K562 (cell line): ENCODE measurements at regions of chr11 and their contacts with region 1.

Region 1: GRCh38 chr11:48109046-48109666 is 107.5 kb upstream of the OR4B1 start:
- DNase-seq: peak; percentile 50 to 58 (median 55)
- ATAC-seq: peak; percentile 79
- H3K4me3 ChIP-seq: no peak overlapping the region
- H3K27ac ChIP-seq: no peak overlapping the region
- H3K4me1 ChIP-seq: peaks cover 4 to 5% of the 10 kb centered on the region in 2 experiments; a peak in 4 of 5 replicates
- H3K27me3 ChIP-seq: no peaks in the 10 kb centered on the region
- CTCF ChIP-seq: peak; percentile 41 to 66 (median 46); a peak in 4 of 6 replicates
- EP300 ChIP-seq: no peak
- POLR2A ChIP-seq: no peak
- RAD21 ChIP-seq: peak; percentile 50 to 69; a peak in 3 of 4 replicates

Region 2: GRCh38 chr11:47766305-47767227 is 342.6 kb before region 1 on chr11:
- CTCF ChIA-PET with region 1: no interaction called
- POLR2A ChIA-PET with region 1: no interaction called
- in situ Hi-C with region 1: no loop called
- intact Hi-C with region 1: loop called (anchors 5 kb)
- DNase-seq: peak in 2 of 4 experiments; percentile 28 to 72
- ATAC-seq: peak; percentile 47
- H3K4me3 ChIP-seq: peak overlapping the region; percentile 85
- H3K27ac ChIP-seq: peak overlapping the region; percentile 93
- H3K4me1 ChIP-seq: peaks cover 8 to 23% of the 10 kb centered on the region in 2 experiments; a peak in 4 of 5 replicates
- H3K27me3 ChIP-seq: no peaks in the 10 kb centered on the region
- CTCF ChIP-seq: no peak
- EP300 ChIP-seq: no peak
- POLR2A ChIP-seq: no peak
- RAD21 ChIP-seq: no peak

Region 3: GRCh38 chr11:47858169-47858543 is 251.0 kb before region 1 on chr11:
- CTCF ChIA-PET with region 1: no interaction called
- POLR2A ChIA-PET with region 1: no interaction called
- in situ Hi-C with region 1: loop called (anchors 10 kb)
- intact Hi-C with region 1: loop called (anchors 10 kb)
- DNase-seq: no peak
- ATAC-seq: no peak
- H3K4me3 ChIP-seq: no peak overlapping the region
- H3K27ac ChIP-seq: no peak overlapping the region
- H3K4me1 ChIP-seq: peaks cover 0 to 9% of the 10 kb centered on the region in 2 experiments; a peak in 3 of 5 replicates
- H3K27me3 ChIP-seq: no peaks in the 10 kb centered on the region
- CTCF ChIP-seq: no peak
- EP300 ChIP-seq: no peak
- POLR2A ChIP-seq: no peak
- RAD21 ChIP-seq: no peak

Region 4: GRCh38 chr11:47932544-47932943 is 176.6 kb before region 1 on chr11:
- CTCF ChIA-PET with region 1: interaction called, 77 read pairs
- POLR2A ChIA-PET with region 1: no interaction called
- in situ Hi-C with region 1: loop called (anchors 5 kb)
- intact Hi-C with region 1: loop called (anchors 1 kb)
- DNase-seq: no peak
- ATAC-seq: no peak
- H3K4me3 ChIP-seq: no peak overlapping the region
- H3K27ac ChIP-seq: no peak overlapping the region
- H3K4me1 ChIP-seq: no peaks in the 10 kb centered on the region; a peak in 1 of 5 replicates
- H3K27me3 ChIP-seq: no peaks in the 10 kb centered on the region
- CTCF ChIP-seq: no peak
- EP300 ChIP-seq: no peak
- POLR2A ChIP-seq: no peak
- RAD21 ChIP-seq: no peak

Region 5: GRCh38 chr11:47943721-47944557 is 165.2 kb before region 1 on chr11:
- CTCF ChIA-PET with region 1: interaction called, 3 read pairs
- POLR2A ChIA-PET with region 1: interaction called, 5 read pairs
- in situ Hi-C with region 1: loop called (anchors 5 kb)
- intact Hi-C with region 1: no loop called
- DNase-seq: peak; percentile 74 to 95 (median 83)
- ATAC-seq: peak; percentile 68
- H3K4me3 ChIP-seq: peak overlapping the region; percentile 16; the same call in 1 of the 2 replicates
- H3K27ac ChIP-seq: peak overlapping the region; percentile 90
- H3K4me1 ChIP-seq: peaks cover 45 to 61% of the 10 kb centered on the region in 2 experiments
- H3K27me3 ChIP-seq: no peaks in the 10 kb centered on the region
- CTCF ChIP-seq: no peak
- EP300 ChIP-seq: peak; percentile 54
- POLR2A ChIP-seq: peak; percentile 72
- RAD21 ChIP-seq: no peak

Region 6: GRCh38 chr11:47964546-47964945 is 144.6 kb before region 1 on chr11:
- CTCF ChIA-PET with region 1: interaction called, 3 read pairs
- POLR2A ChIA-PET with region 1: interaction called, 3 read pairs
- in situ Hi-C with region 1: no loop called
- intact Hi-C with region 1: loop called (anchors 1 kb)
- DNase-seq: no peak
- ATAC-seq: no peak
- H3K4me3 ChIP-seq: no peak overlapping the region
- H3K27ac ChIP-seq: no peak overlapping the region
- H3K4me1 ChIP-seq: no peaks in the 10 kb centered on the region; a peak in 1 of 5 replicates
- H3K27me3 ChIP-seq: no peaks in the 10 kb centered on the region
- CTCF ChIP-seq: no peak
- EP300 ChIP-seq: no peak
- POLR2A ChIP-seq: no peak
- RAD21 ChIP-seq: no peak

Region 7: GRCh38 chr11:47979378-47980244 is 129.5 kb before region 1 on chr11:
- CTCF ChIA-PET with region 1: no interaction called
- POLR2A ChIA-PET with region 1: no interaction called
- in situ Hi-C with region 1: no loop called
- intact Hi-C with region 1: loop called (anchors 5 kb)
- DNase-seq: no peak
- ATAC-seq: peak; percentile 5
- H3K4me3 ChIP-seq: peak overlapping the region; percentile 61
- H3K27ac ChIP-seq: no peak overlapping the region
- H3K4me1 ChIP-seq: peaks cover 26 to 28% of the 10 kb centered on the region in 2 experiments
- H3K27me3 ChIP-seq: peaks cover 0 to 2% of the 10 kb centered on the region in 2 experiments; a peak in 1 of 5 replicates
- CTCF ChIP-seq: 0 out of 6 replicates have a peak, but pooled peaks of 2 of the 3 experiments have one; percentile 20 to 23
- EP300 ChIP-seq: no peak
- POLR2A ChIP-seq: no peak
- RAD21 ChIP-seq: no peak; a peak in 1 of 4 replicates